Posterior vena cava (tissue), 2 donors: ENCODE measurements at regions of chr6 and their contacts with region 1.

Region 1: GRCh38 chr6:41027799-41028628 is 11.0 kb downstream of the UNC5CL start:
- DNase-seq: peak; percentile 96

Region 2: DNA sequence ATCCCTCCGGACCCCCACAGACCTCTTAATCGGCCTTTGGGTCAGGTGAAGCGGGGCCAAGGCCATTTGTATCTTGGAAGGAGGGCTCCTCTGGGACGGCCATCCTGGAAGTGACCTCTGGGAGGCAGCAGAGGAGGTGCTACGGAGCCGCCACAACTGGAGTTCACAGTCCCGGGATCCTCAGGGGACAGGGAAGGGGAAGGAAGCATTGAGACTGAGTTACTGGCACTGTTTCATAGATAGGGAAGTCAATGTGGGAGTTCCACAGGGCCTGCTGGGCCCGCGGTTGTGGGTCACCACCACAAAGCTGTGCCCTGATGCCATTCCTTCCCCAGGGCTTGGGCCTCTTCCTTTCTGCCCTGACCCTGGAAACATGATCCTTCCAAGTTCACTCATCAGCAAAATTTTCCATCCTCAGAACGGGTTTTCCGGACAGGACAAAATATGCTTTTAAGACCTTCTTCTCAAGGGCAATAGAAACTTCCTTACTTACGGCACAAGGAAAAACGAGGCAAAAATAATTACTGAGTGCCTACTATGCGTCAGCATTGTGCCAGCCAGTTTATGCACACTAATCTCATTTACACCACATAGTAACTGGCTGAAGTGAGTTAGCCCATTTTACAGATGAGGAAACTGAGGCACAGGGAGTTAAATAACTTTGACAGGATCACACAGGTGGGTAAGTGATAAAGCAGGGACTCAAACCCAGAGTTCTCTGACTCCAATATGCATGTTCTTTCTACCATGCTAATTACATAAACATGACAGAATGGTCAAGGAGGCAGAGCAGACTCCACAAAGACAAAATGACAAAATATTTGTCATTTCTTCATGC is 132.8 kb before region 1 on chr6:
- intact Hi-C with region 1: loop called in 1 of 2 experiments (anchors 10 kb)
- DNase-seq: peak; percentile 82

Region 3: GRCh38 chr6:40962241-40962640 is 65.8 kb before region 1 on chr6:
- intact Hi-C with region 1: no loop called
- DNase-seq: no peak

Region 4: DNA sequence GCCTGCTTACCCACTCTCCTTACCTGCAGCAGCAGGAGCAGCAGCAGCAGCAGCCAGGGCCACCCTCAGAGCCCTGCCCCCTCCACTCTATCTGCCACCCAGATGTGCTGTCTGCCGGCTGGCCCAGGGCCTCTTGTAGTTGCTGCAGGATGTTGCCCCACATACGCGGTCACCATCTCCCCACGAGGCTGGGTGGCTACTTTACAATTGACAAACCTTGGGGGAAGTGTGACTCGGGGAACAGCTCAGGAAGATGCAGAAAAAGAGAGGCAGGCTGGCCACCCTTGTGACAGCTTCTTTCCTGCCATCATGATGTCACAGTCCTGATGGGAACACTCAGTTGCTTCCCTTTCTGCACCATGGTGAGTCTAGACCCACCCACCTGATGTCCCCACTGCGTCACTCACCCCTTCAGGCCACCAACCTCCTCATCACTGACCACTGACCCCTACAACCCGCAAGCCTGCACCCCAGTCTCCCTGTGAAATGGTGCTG is 243.9 kb after region 1 on chr6:
- intact Hi-C with region 1: no loop called
- DNase-seq: peak; percentile 92